ENCODE measurements at regions of chr12 and their contacts with region 1.

Region 1: GRCh38 chr12:103930034-103930786 is at the start of gene HSP90B1:
- DNase-seq: peak; percentile 95 to 100 (median 99)
- H3K4me3 ChIP-seq: peak within 1 kb of the TSS; percentile 73 to 100 (median 94)
- H3K27ac ChIP-seq: peak within 1 kb of the TSS; percentile 74 to 98 (median 95)
- H3K27me3 ChIP-seq: no peaks in the 10 kb centered on the region
- CTCF ChIP-seq: peak in 2 of 56 donors; percentile 2 to 23
- total RNA-seq, gene HSP90B1: 164 to 489 (median 276) TPM

Region 2: GRCh38 chr12:103799870-103800771 is 130.1 kb before region 1 on chr12:
- intact Hi-C with region 1: no loop called
- DNase-seq: peak in 9 of 10 donors; percentile 28 to 75 (median 68)
- H3K4me3 ChIP-seq: peak overlapping the region in 40 of 59 donors; percentile 1 to 54 (median 34)
- H3K27ac ChIP-seq: peak overlapping the region in 43 of 59 donors; percentile 0 to 72 (median 48)
- H3K27me3 ChIP-seq: no peaks in the 10 kb centered on the region
- CTCF ChIP-seq: no peak

Region 3: DNA sequence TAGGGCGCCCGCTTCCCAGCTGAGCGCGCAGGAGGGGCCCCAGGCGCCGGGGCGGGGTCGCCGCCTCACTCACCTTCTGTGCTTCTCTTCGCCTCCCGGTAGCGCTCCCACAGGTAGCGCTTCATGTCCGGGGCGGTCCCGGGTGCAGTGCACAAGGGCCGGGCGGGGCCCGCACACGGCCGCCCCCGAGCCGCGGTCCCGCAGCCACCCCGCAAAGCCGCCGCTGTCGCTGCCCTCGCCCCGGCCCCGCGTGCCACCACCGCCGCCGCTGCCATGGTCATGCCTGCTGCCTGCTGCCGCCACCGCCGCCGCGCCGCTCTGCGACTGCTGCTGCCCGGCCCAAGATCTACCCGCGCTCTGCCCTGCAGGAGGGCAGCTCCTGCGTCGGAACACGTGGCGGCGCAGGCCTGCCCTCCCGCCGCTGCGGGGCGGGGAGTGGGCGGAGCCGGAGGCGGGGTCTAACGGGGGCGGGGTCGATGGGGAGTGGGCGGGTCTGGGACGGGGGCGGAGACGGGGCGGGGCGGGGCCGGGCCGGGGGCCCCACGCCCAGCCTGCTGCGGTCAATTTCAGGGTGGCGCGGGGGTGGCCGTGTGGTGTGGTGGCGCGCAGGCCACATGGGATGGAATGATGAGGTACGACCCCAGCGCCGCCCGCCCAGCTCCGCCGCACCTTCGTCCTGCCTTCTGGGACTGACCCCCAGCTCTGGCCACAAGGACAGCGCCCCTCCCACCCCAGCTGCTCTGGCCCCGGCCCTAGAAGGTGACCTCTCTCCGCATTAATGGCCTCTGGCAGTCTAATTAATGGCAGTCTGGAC is 89.1 kb before region 1 on chr12 and contains the start of gene NT5DC3:
- intact Hi-C with region 1: loop called (anchors 5 kb)
- DNase-seq: peak; percentile 57 to 91 (median 77)
- H3K4me3 ChIP-seq: peak within 1 kb of the TSS; percentile 59 to 93 (median 79)
- H3K27ac ChIP-seq: peak within 1 kb of the TSS in 45 of 59 donors; percentile 7 to 86 (median 63)
- H3K27me3 ChIP-seq: no peaks in the 10 kb centered on the region
- CTCF ChIP-seq: peak in 10 of 56 donors; percentile 5 to 26 (median 12)
- total RNA-seq, gene NT5DC3: 16.3 to 76.3 (median 44.0) TPM

Region 4: DNA sequence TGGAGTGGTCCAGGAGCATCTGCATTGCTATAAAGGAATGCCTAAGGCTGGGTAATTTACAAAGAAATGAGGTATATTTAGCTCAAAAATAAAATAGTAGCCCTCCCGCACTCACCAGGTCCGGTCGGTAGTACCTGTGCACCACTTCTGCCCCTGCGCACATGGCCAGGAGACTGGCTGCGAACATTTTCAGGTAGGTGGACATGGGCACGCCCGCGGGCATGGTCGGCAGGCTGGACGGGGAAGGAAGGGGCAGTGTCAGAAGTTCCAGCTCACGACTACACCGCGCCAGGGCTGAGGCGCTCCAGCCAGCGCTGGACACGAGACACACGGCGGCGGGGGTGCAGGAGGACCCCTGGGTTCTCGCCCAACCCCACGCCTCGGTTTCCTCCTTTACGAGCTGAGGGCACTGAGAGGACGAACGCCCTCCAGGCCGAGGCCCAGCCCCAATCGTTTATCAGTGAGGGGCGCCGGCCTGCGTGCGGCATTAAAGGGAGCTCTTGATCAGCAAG is 26.4 kb after region 1 on chr12:
- intact Hi-C with region 1: loop called (anchors 2 kb)
- DNase-seq: peak in 3 of 10 donors; percentile 23 to 60 (median 37)
- H3K4me3 ChIP-seq: peak overlapping the region; percentile 67 to 100 (median 91)
- H3K27ac ChIP-seq: peak overlapping the region; percentile 12 to 99 (median 94)
- H3K27me3 ChIP-seq: no peaks in the 10 kb centered on the region
- CTCF ChIP-seq: no peak

Region 5: DNA sequence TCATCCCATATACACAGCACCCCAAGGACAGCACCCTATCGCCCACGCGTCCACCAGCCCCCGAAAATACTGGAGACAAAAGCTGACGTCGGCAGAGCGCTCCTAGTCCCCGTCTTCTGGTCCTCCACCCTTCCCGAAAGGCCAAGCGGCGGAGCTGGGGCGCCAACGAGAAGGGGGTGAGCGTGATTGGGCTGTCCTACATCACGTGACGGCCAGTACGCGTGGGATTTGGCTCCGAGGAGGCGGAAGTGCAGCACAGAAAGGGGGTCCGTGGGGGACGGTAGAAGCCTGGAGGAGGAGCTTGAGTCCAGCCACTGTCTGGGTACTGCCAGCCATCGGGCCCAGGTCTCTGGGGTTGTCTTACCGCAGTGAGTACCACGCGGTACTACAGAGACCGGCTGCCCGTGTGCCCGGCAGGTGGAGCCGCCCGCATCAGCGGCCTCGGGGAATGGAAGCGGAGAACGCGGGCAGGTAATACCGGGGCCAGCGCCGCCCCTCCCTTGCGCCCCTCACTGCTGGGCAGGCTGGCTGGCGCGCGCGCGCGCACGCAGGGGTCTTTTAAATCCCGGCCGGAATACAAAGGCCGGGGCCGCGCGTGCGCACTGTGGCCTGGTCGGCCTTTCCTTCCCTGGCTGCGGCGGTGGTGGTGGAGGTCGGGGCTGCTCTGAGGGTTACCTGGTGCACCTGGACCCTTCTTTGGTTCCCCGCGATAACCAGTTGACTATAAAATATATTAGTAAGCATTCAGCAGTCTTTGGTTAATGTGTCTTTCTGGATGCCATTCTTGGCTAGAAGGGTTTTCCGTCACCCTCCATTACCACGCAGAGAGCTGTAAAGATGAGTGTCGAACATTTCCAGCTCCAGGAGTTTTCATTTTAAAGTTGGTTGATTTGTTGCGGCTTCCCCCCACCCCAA is 35.6 kb after region 1 on chr12 and contains the start of gene TDG:
- intact Hi-C with region 1: loop called (anchors 1 to 2 kb)
- DNase-seq: peak; percentile 96 to 99 (median 98)
- H3K4me3 ChIP-seq: peak within 1 kb of the TSS; percentile 55 to 99 (median 89)
- H3K27ac ChIP-seq: peak within 1 kb of the TSS; percentile 65 to 98 (median 94)
- H3K27me3 ChIP-seq: no peaks in the 10 kb centered on the region
- CTCF ChIP-seq: peak in 47 of 56 donors; percentile 0 to 58 (median 32)
- total RNA-seq, gene TDG: 9.9 to 22.2 (median 15.5) TPM

Region 6: GRCh38 chr12:104303538-104304151 is 373.4 kb after region 1 on chr12 and contains the start of gene EID3:
- intact Hi-C with region 1: loop called in 1 of 2 experiments (anchors 10 kb)
- DNase-seq: peak; percentile 82 to 95 (median 86)
- H3K4me3 ChIP-seq: peak within 1 kb of the TSS; percentile 42 to 79 (median 66)
- H3K27ac ChIP-seq: peak within 1 kb of the TSS in 53 of 59 donors; percentile 3 to 86 (median 54)
- H3K27me3 ChIP-seq: no peaks in the 10 kb centered on the region
- CTCF ChIP-seq: peak in 26 of 56 donors; percentile 5 to 59 (median 29)
- total RNA-seq, gene EID3: 2.7 to 9.5 (median 5.7) TPM

Region 7: DNA sequence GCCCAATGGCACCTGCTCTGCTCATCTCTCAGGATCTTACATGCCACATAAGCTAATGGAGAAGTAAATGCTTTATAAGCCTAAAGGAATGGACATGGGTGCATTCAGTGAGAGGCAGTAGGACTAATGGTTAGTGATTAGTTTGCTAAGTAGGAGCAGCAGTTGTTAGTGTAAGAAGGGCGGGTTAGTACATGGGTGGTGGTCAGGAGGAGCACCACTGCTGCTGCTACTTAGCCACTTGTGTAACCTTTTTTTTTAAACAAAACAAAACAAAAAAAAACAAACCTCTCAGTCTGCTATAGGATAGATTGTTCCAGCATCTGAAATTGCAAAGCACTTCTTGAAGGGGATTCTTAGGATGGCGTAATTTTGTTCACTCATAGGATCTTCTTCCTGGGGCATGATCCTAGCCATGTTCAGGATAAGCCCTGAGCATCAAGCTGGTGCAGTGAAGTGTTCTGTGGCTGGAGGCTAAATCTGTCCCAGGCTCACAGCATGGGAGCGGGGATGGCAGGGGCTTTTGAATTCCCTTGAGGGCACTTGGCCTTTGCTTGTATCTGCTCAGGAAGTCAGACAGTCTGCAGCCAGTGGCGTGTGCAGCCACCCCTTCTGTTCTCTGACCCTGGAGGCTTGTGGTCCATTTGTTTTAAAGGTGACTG is 590.2 kb after region 1 on chr12:
- intact Hi-C with region 1: no loop called
- DNase-seq: no peak
- H3K4me3 ChIP-seq: no peak overlapping the region
- H3K27ac ChIP-seq: no peak overlapping the region
- H3K27me3 ChIP-seq: no peaks in the 10 kb centered on the region
- CTCF ChIP-seq: no peak